IMR-90 (cell line): ENCODE measurements at regions of chr5 and their contacts with region 1.

Region 1: DNA sequence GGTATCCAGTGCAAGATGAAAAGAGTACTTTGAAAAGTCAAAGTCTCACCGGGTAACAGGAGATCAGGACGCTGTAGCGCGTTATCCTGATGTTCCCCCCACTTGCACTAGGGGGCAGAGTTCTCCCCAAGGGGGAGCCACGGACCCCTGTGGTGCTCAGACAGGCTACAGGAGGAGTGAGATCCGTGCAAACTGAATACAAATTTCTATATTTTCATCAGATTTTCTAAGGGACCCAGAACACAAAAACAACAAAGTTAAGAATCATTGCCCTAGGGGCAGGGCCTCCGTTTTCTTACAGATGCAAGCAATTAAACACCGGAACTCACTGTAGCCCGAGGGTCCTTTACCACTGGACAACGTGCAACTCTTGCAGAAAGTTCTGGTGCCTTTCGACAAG is 2.0 kb downstream of the MYO10 start:
- DNase-seq: peak; percentile 80
- ATAC-seq: peak; percentile 55
- H3K4me3 ChIP-seq: peak overlapping the region; percentile 85
- H3K27ac ChIP-seq: peak overlapping the region; percentile 99
- H3K4me1 ChIP-seq: peaks cover 15% of the 10 kb centered on the region
- H3K27me3 ChIP-seq: no peaks in the 10 kb centered on the region
- CTCF ChIP-seq: peak; percentile 88
- POLR2A ChIP-seq: peak; percentile 74
- RAD21 ChIP-seq: peak; percentile 83

Region 2: GRCh38 chr5:16803830-16804229 is 130.3 kb before region 1 on chr5:
- CTCF ChIA-PET with region 1: no interaction called
- POLR2A ChIA-PET with region 1: no interaction called
- dilution Hi-C with region 1: no loop called
- in situ Hi-C with region 1: loop called (anchors 5 kb)
- intact Hi-C with region 1: no loop called
- DNase-seq: no peak
- ATAC-seq: no peak
- H3K4me3 ChIP-seq: no peak overlapping the region
- H3K27ac ChIP-seq: no peak overlapping the region
- H3K4me1 ChIP-seq: peaks cover 9% of the 10 kb centered on the region
- H3K27me3 ChIP-seq: no peaks in the 10 kb centered on the region
- CTCF ChIP-seq: no peak
- POLR2A ChIP-seq: no peak
- RAD21 ChIP-seq: no peak

Region 3: DNA sequence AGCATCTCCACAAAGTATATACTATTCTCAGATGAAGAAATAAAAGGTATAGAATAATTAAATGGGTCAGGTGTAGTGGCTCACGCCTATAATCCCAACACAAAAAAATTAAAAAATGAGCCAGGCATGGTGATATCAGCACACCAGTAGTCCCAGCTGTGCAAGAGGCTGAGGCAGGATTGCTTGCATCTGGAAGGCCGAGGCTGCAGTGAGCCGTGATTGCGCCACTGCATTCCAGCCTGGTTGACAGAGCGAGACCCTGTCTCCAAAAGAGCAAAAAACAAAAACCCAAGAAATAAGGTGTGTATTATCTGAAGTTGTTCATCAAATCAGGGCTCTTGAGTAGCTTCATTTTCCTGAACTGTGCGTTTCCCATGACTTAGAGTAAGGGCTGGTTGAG is 85.2 kb after region 1 on chr5:
- CTCF ChIA-PET with region 1: no interaction called
- POLR2A ChIA-PET with region 1: no interaction called
- dilution Hi-C with region 1: no loop called
- in situ Hi-C with region 1: no loop called
- intact Hi-C with region 1: loop called (anchors 1 kb)
- DNase-seq: peak; percentile 72
- ATAC-seq: peak; percentile 64
- H3K4me3 ChIP-seq: no peak overlapping the region
- H3K27ac ChIP-seq: peak overlapping the region; percentile 85
- H3K4me1 ChIP-seq: peaks cover 18% of the 10 kb centered on the region
- H3K27me3 ChIP-seq: no peaks in the 10 kb centered on the region
- CTCF ChIP-seq: no peak
- POLR2A ChIP-seq: no peak
- RAD21 ChIP-seq: no peak

Region 4: GRCh38 chr5:17064241-17064640 is 130.1 kb after region 1 on chr5:
- CTCF ChIA-PET with region 1: no interaction called
- POLR2A ChIA-PET with region 1: interaction called, 11 read pairs
- dilution Hi-C with region 1: no loop called
- in situ Hi-C with region 1: no loop called
- intact Hi-C with region 1: no loop called
- DNase-seq: no peak
- ATAC-seq: no peak; the same call in 1 of the 2 replicates
- H3K4me3 ChIP-seq: no peak overlapping the region
- H3K27ac ChIP-seq: no peak overlapping the region
- H3K4me1 ChIP-seq: peaks cover 2% of the 10 kb centered on the region
- H3K27me3 ChIP-seq: no peaks in the 10 kb centered on the region
- CTCF ChIP-seq: no peak
- POLR2A ChIP-seq: no peak
- RAD21 ChIP-seq: no peak

Region 5: GRCh38 chr5:17132444-17133083 is 198.4 kb after region 1 on chr5:
- CTCF ChIA-PET with region 1: interaction called, 19 read pairs
- POLR2A ChIA-PET with region 1: no interaction called
- dilution Hi-C with region 1: no loop called
- in situ Hi-C with region 1: loop called (anchors 5 kb)
- intact Hi-C with region 1: loop called (anchors 1 kb)
- DNase-seq: peak; percentile 63
- ATAC-seq: peak; percentile 50
- H3K4me3 ChIP-seq: no peak overlapping the region
- H3K27ac ChIP-seq: no peak overlapping the region
- H3K4me1 ChIP-seq: peaks cover 12% of the 10 kb centered on the region
- H3K27me3 ChIP-seq: no peaks in the 10 kb centered on the region
- CTCF ChIP-seq: peak; percentile 64
- POLR2A ChIP-seq: no peak
- RAD21 ChIP-seq: peak; percentile 69

Region 6: GRCh38 chr5:17216176-17216973 is 282.3 kb after region 1 on chr5:
- CTCF ChIA-PET with region 1: no interaction called
- POLR2A ChIA-PET with region 1: no interaction called
- dilution Hi-C with region 1: no loop called
- in situ Hi-C with region 1: no loop called
- intact Hi-C with region 1: no loop called
- DNase-seq: peak; percentile 76
- ATAC-seq: peak; percentile 24
- H3K4me3 ChIP-seq: peak overlapping the region; percentile 49
- H3K27ac ChIP-seq: peak overlapping the region; percentile 27
- H3K4me1 ChIP-seq: peaks cover 3% of the 10 kb centered on the region
- H3K27me3 ChIP-seq: no peaks in the 10 kb centered on the region; the same call in 1 of the 2 replicates
- CTCF ChIP-seq: peak; percentile 88
- POLR2A ChIP-seq: no peak
- RAD21 ChIP-seq: peak; percentile 95